ENCODE measurements at regions of chr15 and their contacts with region 1.

Region 1: DNA sequence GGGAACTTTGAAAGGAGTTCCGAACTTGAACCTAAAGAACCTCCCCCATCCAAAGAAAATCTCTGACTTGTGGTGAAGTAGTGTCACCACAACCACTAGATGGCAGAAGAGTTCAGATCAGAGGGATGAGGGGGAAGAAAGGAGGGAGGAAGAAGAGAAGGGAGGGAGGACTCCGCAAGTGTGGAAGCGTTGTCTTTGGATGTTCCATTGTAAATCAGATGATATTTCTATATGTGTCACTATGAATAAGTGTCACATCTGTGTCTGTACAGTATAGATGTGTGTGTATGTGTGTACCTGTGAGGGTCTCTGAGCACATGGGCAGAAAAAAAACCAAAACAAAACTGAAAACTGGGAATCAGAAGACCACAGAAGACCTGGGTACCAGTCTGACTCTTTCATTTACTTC is 16.9 kb downstream of the SLC24A1 start:
- DNase-seq: peak; percentile 34
- H3K4me3 ChIP-seq: no peak overlapping the region
- CTCF ChIP-seq: peak; percentile 80

Region 2: DNA sequence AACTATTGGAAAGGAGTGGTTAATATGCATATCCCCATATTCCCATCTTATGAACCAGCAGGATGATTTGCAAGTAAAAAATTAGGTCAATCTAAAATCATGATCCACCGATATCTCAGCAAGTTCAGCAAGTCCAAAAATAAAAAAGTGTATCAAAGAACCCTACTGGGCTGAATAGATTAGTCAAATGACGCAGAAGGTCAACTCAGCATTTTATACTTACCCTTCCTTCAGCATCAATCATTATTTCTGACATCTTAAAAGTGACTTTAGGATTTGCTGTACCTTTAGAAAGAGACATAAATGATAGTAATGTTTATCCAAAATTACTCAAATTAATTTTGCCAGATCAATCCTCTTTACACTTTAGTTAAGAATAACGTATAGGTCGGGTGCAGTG is 153.8 kb before region 1 on chr15:
- CTCF ChIA-PET with region 1: no interaction called
- POLR2A ChIA-PET with region 1: no interaction called
- DNase-seq: no peak
- H3K4me3 ChIP-seq: no peak overlapping the region
- CTCF ChIP-seq: no peak

Region 3: DNA sequence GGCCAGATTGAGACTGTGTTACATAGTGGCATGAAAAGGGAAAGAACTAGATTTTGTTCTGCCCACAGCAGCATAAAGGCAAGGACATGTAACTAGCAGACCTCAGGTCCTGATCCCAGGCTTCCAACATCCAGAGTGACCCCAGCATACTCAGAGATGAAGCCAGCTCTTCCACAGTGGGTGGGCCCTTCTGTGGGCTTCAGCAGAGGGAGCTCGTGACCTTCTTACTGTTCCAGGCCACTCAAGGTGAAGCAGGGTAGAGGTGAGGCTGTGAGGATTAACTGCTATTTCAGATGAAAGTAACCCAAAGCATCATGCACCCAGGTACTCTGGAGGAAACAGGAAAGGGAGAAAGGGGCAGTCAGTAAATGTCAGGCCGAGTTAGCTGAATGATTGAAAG is 17.9 kb before region 1 on chr15:
- CTCF ChIA-PET with region 1: interaction called, 45 read pairs
- POLR2A ChIA-PET with region 1: no interaction called
- DNase-seq: no peak
- H3K4me3 ChIP-seq: no peak overlapping the region
- CTCF ChIP-seq: no peak

Region 4: DNA sequence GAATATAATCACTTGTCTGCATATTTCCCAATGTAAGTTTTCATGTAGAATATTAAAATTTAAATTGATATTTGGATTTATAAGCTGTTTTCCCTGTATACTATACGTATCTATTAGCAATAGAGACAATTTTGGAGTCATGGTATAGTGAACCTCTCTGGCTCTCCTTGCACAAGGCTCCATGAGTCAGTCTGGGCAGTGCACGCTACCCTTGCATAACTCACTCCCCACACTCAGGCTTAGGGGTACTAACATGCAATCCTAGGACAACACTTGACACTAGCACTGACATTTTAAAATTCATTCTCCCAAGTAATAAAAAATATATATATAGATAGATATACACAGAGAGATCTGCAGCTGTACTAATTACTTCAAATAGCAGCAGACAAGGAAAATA is 22.2 kb after region 1 on chr15:
- CTCF ChIA-PET with region 1: interaction called, 24 read pairs
- POLR2A ChIA-PET with region 1: no interaction called
- DNase-seq: no peak
- H3K4me3 ChIP-seq: no peak overlapping the region
- CTCF ChIP-seq: no peak

Region 5: GRCh38 chr15:65833501-65834205 is 195.0 kb after region 1 on chr15:
- CTCF ChIA-PET with region 1: interaction called, 13 read pairs
- POLR2A ChIA-PET with region 1: no interaction called
- DNase-seq: no peak
- H3K4me3 ChIP-seq: no peak overlapping the region
- CTCF ChIP-seq: no peak

Region 6: GRCh38 chr15:65862682-65863081 is 224.0 kb after region 1 on chr15:
- CTCF ChIA-PET with region 1: interaction called, 136 read pairs
- POLR2A ChIA-PET with region 1: no interaction called
- DNase-seq: no peak
- H3K4me3 ChIP-seq: no peak overlapping the region
- CTCF ChIP-seq: peak; percentile 37

Measured in AG04449 (cell line).